PC-9 (cell line): ENCODE measurements at regions of chr2 and their contacts with region 1.

Region 1: GRCh38 chr2:75320908-75321598 is 121.7 kb upstream of the TACR1 start:
- DNase-seq: no peak
- H3K4me3 ChIP-seq: no peak overlapping the region
- H3K27ac ChIP-seq: no peak overlapping the region
- H3K4me1 ChIP-seq: no peaks in the 10 kb centered on the region
- H3K27me3 ChIP-seq: no peaks in the 10 kb centered on the region
- CTCF ChIP-seq: no peak

Region 2: GRCh38 chr2:74639543-74639942 is 681.5 kb before region 1 on chr2:
- CTCF ChIA-PET with region 1: no interaction called
- POLR2A ChIA-PET with region 1: no interaction called
- intact Hi-C with region 1: no loop called
- DNase-seq: no peak
- H3K4me3 ChIP-seq: no peak overlapping the region
- H3K27ac ChIP-seq: no peak overlapping the region
- H3K4me1 ChIP-seq: no peaks in the 10 kb centered on the region
- H3K27me3 ChIP-seq: no peaks in the 10 kb centered on the region
- CTCF ChIP-seq: no peak

Region 3: GRCh38 chr2:75432761-75433361 is 111.8 kb after region 1 on chr2:
- CTCF ChIA-PET with region 1: no interaction called
- POLR2A ChIA-PET with region 1: interaction called, 11 read pairs
- intact Hi-C with region 1: no loop called
- DNase-seq: no peak
- H3K4me3 ChIP-seq: no peak overlapping the region
- H3K27ac ChIP-seq: no peak overlapping the region
- H3K4me1 ChIP-seq: peaks cover 10% of the 10 kb centered on the region
- H3K27me3 ChIP-seq: no peaks in the 10 kb centered on the region
- CTCF ChIP-seq: no peak